GM12878 (cell line): ENCODE measurements at regions of chr17 and their contacts with region 1.

Region 1: DNA sequence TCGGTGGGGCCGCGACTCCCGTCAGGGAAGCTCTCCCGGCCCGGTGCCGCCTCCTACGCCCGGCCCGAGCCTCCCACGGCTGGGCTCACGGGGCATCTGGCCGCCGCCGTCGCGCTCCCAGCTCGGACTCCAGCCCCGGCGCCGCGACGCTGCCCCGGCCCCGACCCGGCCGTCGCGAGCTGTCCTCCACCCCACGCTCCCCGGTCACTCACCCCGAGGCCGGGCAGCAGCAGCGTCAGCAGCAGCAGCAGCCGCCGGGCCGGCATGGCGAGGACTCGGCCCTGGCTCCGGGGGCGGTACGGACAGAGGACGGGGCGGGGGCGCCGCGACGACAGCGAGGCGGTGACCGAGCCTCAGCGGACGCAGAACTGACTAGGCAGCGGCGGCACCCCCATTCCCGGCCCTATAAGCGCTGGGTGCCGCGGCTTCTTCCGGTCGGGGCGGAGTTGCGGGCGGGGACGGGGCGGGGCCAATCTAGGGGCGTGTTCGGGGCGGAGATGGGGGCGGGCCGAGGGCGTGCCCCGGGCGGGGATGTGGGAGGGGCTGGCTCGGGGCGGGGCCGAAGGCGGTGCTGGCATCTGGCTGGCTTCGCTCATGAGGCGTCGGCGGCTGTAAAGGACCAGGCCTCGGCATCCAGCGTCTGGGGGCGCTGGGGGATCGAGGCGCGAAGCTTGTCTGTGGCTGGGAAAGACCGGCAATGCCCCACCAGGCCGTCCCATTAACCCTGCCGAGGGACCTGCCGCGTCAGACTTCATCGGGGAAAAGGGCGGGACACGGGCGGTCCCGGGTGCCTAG is at the start of gene ERN1:
- DNase-seq: peak; percentile 54
- ATAC-seq: peak; percentile 89
- H3K4me3 ChIP-seq: peak within 1 kb of the TSS; percentile 93
- H3K27ac ChIP-seq: peak within 1 kb of the TSS; percentile 83
- H3K4me1 ChIP-seq: peaks cover 32% of the 10 kb centered on the region
- H3K27me3 ChIP-seq: no peaks in the 10 kb centered on the region
- CTCF ChIP-seq: 0 out of 6 replicates have a peak, but pooled peaks of 1 of the 3 experiments have one; percentile 0
- EP300 ChIP-seq: no peak
- POLR2A ChIP-seq: peak; percentile 98
- RAD21 ChIP-seq: no peak
- polyA plus RNA-seq, gene ERN1: 2.6 to 3.4 TPM

Region 2: GRCh38 chr17:63911657-63912426 is 218.1 kb before region 1 on chr17:
- CTCF ChIA-PET with region 1: interaction called, 206 read pairs
- POLR2A ChIA-PET with region 1: no interaction called
- RAD21 ChIA-PET with region 1: interaction called, 15 read pairs
- SMC1A ChIA-PET with region 1: interaction called, 15 read pairs
- in situ Hi-C with region 1: no loop called
- intact Hi-C with region 1: loop called (anchors 2 kb)
- DNase-seq: no peak
- ATAC-seq: peak; percentile 78
- H3K4me3 ChIP-seq: no peak overlapping the region
- H3K27ac ChIP-seq: no peak overlapping the region
- H3K4me1 ChIP-seq: peaks cover 5% of the 10 kb centered on the region
- H3K27me3 ChIP-seq: peaks cover 0 to 2% of the 10 kb centered on the region in 2 experiments; a peak in 2 of 4 replicates
- CTCF ChIP-seq: peak; percentile 58 to 79 (median 66)
- EP300 ChIP-seq: no peak
- POLR2A ChIP-seq: no peak
- RAD21 ChIP-seq: peak; percentile 68

Region 3: GRCh38 chr17:63984651-63985386 is 145.1 kb before region 1 on chr17:
- CTCF ChIA-PET with region 1: interaction called, 12 read pairs
- POLR2A ChIA-PET with region 1: no interaction called
- RAD21 ChIA-PET with region 1: interaction called, 8 read pairs
- SMC1A ChIA-PET with region 1: interaction called, 10 read pairs
- in situ Hi-C with region 1: no loop called
- intact Hi-C with region 1: no loop called
- DNase-seq: no peak
- ATAC-seq: peak; percentile 54
- H3K4me3 ChIP-seq: no peak overlapping the region
- H3K27ac ChIP-seq: no peak overlapping the region
- H3K4me1 ChIP-seq: no peaks in the 10 kb centered on the region
- H3K27me3 ChIP-seq: no peaks in the 10 kb centered on the region
- CTCF ChIP-seq: no peak
- EP300 ChIP-seq: no peak
- POLR2A ChIP-seq: no peak
- RAD21 ChIP-seq: no peak

Region 4: GRCh38 chr17:64025732-64026294 is 104.1 kb before region 1 on chr17:
- CTCF ChIA-PET with region 1: interaction called, 915 read pairs
- POLR2A ChIA-PET with region 1: interaction called, 86 read pairs
- RAD21 ChIA-PET with region 1: interaction called, 507 read pairs
- SMC1A ChIA-PET with region 1: interaction called, 570 read pairs
- in situ Hi-C with region 1: loop called (anchors 5 kb)
- intact Hi-C with region 1: loop called (anchors 1 kb)
- DNase-seq: peak; percentile 55
- ATAC-seq: peak; percentile 90
- H3K4me3 ChIP-seq: no peak overlapping the region; the same call in 1 of the 2 replicates
- H3K27ac ChIP-seq: 0 out of 2 replicates have a peak overlapping the region, but pooled peaks have one; percentile 7
- H3K4me1 ChIP-seq: peaks cover 11% of the 10 kb centered on the region
- H3K27me3 ChIP-seq: no peaks in the 10 kb centered on the region
- CTCF ChIP-seq: peak; percentile 94 to 100 (median 97)
- EP300 ChIP-seq: no peak
- POLR2A ChIP-seq: no peak
- RAD21 ChIP-seq: peak; percentile 75

Region 5: GRCh38 chr17:64063766-64064224 is 66.2 kb before region 1 on chr17:
- CTCF ChIA-PET with region 1: interaction called, 140 read pairs
- POLR2A ChIA-PET with region 1: interaction called, 15 read pairs
- RAD21 ChIA-PET with region 1: interaction called, 120 read pairs
- SMC1A ChIA-PET with region 1: interaction called, 151 read pairs
- in situ Hi-C with region 1: no loop called
- intact Hi-C with region 1: loop called (anchors 2 kb)
- DNase-seq: no peak
- ATAC-seq: peak; percentile 51
- H3K4me3 ChIP-seq: no peak overlapping the region
- H3K27ac ChIP-seq: peak overlapping the region; percentile 54; the same call in 1 of the 2 replicates
- H3K4me1 ChIP-seq: peaks cover 37% of the 10 kb centered on the region
- H3K27me3 ChIP-seq: no peaks in the 10 kb centered on the region
- CTCF ChIP-seq: peak; percentile 40 to 49 (median 45)
- EP300 ChIP-seq: no peak
- POLR2A ChIP-seq: no peak
- RAD21 ChIP-seq: peak; percentile 63

Region 6: GRCh38 chr17:64117981-64118979 is 11.7 kb before region 1 on chr17:
- CTCF ChIA-PET with region 1: interaction called, 82 read pairs
- POLR2A ChIA-PET with region 1: interaction called, 73 read pairs
- RAD21 ChIA-PET with region 1: interaction called, 22 read pairs
- SMC1A ChIA-PET with region 1: interaction called, 60 read pairs
- in situ Hi-C with region 1: no loop called
- intact Hi-C with region 1: no loop called
- DNase-seq: no peak
- ATAC-seq: no peak
- H3K4me3 ChIP-seq: no peak overlapping the region
- H3K27ac ChIP-seq: no peak overlapping the region
- H3K4me1 ChIP-seq: peaks cover 30% of the 10 kb centered on the region
- H3K27me3 ChIP-seq: no peaks in the 10 kb centered on the region
- CTCF ChIP-seq: no peak
- EP300 ChIP-seq: no peak
- POLR2A ChIP-seq: no peak
- RAD21 ChIP-seq: no peak